Testis (tissue), 5 donors: ENCODE measurements at regions of chr6 and their contacts with region 1.

Region 1: DNA sequence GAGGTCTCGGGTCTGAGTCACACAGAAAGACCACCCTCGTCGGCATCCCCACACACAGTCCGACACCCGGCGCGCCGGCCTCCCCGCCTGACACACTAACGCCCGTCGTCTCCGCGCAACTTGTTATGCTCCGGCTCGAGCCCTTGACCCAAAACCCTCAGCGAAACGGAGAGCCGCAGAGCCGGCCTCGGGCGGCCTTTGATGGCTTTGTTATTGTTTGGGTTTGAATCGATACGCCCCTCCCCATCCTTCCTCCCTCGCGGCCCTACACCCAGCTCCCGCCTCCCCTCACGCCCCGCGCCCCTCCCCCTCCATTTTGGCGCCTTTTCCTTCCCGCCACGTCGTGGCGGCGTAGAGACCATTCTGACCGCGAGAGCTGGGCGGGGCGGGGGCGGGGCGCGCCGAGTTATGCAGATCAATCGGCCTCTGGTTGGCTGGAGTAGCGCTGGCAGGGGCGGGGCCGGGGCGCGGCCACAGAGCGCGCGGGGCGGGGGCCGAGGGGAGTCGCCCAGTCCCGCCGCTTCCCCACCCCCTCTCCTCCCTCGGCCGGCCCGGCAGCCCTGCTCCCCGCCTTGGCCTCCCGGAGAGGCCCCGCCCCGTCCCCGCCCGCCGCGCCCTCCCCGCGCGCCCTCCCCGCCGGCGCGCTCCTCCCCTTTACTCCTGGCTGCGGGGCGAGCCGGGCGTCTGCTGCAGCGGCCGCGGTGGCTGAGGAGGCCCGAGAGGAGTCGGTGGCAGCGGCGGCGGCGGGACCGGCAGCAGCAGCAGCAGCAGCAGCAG is at the start of gene PIM1:
- DNase-seq: peak; percentile 100
- H3K4me3 ChIP-seq: peak within 1 kb of the TSS; percentile 77 to 82
- H3K27ac ChIP-seq: peak within 1 kb of the TSS; percentile 92 to 96
- H3K4me1 ChIP-seq: peaks cover 17% of the 10 kb centered on the region
- H3K27me3 ChIP-seq: no peaks in the 10 kb centered on the region
- CTCF ChIP-seq: no peak
- POLR2A ChIP-seq: no peak
- total RNA-seq, gene PIM1: 20.4 to 30.8 TPM

Region 2: DNA sequence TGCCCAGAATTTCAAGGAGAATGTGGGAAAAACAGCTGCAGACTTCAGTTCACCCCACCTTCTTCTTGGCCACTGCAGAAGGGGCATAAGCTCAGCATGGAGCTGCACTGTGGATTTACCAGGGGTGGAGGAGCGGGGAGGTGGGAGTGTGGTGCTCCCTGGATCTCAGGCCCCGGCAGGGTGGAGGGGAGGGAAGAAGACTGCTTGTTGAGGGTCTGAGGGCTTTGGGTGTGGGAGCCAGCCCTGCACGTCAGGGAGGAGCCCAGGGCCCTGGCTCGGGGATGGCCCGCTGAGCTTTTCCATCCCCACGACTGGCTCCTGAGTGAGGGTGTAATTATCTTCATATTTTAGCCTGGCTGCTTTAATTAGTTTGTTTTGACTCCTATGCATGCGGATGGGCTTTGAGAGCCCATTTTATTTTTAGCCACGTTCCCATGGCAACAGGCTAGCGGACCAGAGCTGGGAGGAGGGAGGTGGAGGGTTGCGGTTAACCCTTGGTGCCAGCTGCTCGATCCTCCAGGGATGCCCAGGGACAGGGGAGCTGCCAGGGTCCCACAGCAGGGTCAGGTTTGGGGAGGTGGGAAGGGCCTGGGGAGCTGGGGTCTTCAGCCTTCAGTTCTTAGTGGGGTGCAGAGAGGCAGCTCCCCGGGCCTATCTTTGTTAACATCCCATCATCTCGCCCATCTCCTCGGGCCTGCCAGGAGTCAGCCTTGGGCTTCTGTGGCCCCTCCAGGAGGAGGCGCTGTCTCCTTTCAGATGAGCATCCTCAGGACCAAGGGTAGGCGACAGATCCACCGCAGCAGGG is 403.9 kb before region 1 on chr6:
- intact Hi-C with region 1: no loop called
- DNase-seq: peak; percentile 87
- H3K4me3 ChIP-seq: no peak overlapping the region
- H3K27ac ChIP-seq: no peak overlapping the region
- H3K4me1 ChIP-seq: peaks cover 12% of the 10 kb centered on the region
- H3K27me3 ChIP-seq: no peaks in the 10 kb centered on the region
- CTCF ChIP-seq: peak; percentile 75 to 92 (median 80)
- POLR2A ChIP-seq: no peak

Region 3: DNA sequence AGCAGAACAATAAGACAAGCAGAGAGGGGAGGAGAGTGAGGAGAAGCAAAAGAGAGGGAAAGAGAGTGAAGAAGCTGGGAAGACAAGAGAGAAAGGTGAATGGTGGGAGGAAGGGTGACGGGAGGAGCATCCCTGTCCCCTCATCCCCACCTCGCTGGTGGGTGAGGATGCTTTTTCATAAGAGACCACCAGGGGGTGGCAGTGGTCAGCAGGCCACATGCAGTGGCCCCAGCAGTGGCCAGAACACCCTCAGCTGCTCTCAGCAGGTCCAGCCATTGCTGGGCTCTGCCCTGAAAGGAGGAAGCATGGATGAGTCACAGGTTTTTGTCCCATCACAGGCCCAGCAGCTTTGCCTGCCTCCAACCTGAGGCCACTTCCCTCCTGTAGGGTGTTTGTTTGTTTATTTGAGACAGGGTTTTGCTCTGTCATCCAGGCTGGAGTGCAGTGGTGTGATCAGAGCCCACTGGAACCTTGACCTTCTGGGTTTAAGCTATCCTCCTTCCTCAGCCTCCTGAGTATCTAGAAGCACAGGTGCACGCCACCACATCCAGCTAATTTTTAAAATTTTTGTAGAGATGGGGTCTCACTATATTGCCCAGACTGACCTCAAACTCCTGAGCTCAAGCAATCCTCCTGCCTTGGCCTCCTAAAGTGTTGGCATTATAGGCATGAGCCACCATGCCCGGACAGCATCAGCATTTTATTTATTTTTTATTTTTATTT is 140.3 kb before region 1 on chr6:
- intact Hi-C with region 1: loop called (anchors 10 kb)
- DNase-seq: peak; percentile 81
- H3K4me3 ChIP-seq: no peak overlapping the region
- H3K27ac ChIP-seq: no peak overlapping the region
- H3K4me1 ChIP-seq: no peaks in the 10 kb centered on the region
- H3K27me3 ChIP-seq: no peaks in the 10 kb centered on the region
- CTCF ChIP-seq: peak; percentile 77 to 82 (median 79)
- POLR2A ChIP-seq: no peak

Region 4: DNA sequence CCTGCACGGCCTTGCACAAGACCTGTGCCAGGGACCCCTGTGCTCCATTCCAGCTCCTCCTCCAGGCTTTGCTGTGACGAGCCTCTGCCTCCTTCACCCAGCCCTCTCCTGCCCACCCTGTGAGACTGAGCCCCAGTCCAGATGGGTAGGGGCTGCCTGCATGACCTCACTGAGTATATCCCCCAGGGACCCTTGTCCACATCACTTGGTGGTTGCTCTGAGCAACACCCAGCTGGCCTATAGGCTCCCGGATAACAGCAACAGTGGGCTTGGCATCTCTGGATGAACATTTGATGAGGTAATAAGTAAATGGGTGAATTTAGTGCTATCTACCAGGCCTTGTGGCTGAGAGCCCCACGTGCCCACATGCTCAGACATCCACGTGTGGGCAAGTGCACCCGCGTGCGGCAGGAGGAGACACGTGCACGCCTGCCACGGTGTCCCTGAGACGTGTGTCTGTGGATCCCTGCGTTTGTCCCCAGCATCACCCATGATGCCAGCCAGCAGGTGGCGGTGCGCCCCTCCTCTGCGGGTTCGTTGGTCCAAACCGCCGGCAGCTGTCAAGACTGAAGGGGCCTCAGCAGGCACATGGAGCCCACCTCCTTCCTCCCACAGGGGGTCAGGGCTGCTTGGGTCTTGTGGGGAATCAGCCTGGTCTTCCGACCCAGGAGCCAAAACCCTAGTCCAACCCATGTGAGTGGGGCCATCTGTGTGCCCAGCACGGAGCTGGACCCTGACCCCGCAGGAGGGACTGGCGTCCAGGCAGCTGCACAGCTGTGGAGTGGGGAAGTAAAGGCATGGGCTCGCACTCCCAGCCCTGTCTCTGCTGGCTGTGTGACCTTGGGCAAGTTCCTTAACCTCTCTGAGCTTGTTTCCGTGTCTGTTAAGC is 118.3 kb before region 1 on chr6:
- intact Hi-C with region 1: loop called (anchors 5 kb)
- DNase-seq: peak; percentile 93
- H3K4me3 ChIP-seq: no peak overlapping the region
- H3K27ac ChIP-seq: no peak overlapping the region
- H3K4me1 ChIP-seq: peaks cover 26% of the 10 kb centered on the region
- H3K27me3 ChIP-seq: no peaks in the 10 kb centered on the region
- CTCF ChIP-seq: peak; percentile 86 to 92 (median 88)
- POLR2A ChIP-seq: no peak

Region 5: GRCh38 chr6:37257634-37258404 is 88.1 kb after region 1 on chr6 and contains the starts of genes TBC1D22B and TMEM217:
- intact Hi-C with region 1: no loop called
- DNase-seq: peak; percentile 99
- H3K4me3 ChIP-seq: peak within 1 kb of the TSS; percentile 66 to 78
- H3K27ac ChIP-seq: peak within 1 kb of the TSS; percentile 82 to 91
- H3K4me1 ChIP-seq: peaks cover 14% of the 10 kb centered on the region
- H3K27me3 ChIP-seq: no peaks in the 10 kb centered on the region
- CTCF ChIP-seq: no peak
- POLR2A ChIP-seq: peak; percentile 33
- total RNA-seq, gene TBC1D22B: 25.6 to 36.4 TPM
- total RNA-seq, gene TMEM217: 13.3 to 16.2 TPM